WTC11 (cell line): ENCODE measurements at regions of chr11 and their contacts with region 1.

Region 1: DNA sequence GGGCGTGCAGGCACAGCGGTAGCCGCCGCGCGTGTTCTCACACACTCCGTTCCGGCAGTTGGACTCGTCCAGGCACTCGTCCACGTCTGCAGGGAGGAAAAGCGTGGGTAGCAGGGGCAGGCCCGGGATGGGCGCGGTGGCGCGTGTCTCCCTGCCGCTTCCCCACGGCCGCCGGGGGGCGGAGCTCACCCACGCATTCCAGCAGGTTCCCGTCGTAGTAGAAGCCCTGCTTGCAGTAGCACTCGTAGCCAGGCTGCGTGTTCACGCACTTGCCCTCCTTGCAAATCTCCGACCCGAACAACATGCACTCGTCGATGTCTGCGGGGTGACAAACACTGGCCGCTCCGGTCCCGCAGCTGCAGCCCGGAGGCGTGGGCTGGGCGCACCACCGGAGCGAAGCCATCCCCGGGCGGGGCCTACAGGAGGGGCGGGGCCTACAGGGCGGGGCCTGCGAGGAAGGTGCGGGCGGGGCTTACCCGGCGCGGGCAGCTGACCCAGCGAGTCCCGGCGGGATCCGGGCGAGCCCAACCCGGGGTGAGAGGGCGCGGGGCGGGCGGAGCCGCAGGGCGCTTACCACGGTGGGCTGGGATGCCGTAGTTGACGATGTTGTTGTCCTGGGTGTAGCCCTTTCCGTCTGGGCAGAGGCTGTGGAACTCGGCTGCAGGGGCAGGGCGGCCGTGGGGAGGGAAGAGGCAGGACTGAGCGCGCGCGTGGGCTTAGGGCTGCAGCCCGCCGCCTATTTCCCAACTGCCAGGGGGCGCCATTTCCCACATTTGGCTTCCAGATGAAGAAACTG is 15.6 kb downstream of the SCYL1 start:
- DNase-seq: peak; percentile 93
- ATAC-seq: peak; percentile 83
- H3K4me3 Mint-ChIP-seq: peak overlapping the region; percentile 68
- H3K27ac Mint-ChIP-seq: no peak overlapping the region
- H3K4me1 Mint-ChIP-seq: peaks cover 3% of the 10 kb centered on the region
- H3K27me3 Mint-ChIP-seq: peaks cover 60% of the 10 kb centered on the region
- CTCF ChIP-seq: peak; percentile 92

Region 2: DNA sequence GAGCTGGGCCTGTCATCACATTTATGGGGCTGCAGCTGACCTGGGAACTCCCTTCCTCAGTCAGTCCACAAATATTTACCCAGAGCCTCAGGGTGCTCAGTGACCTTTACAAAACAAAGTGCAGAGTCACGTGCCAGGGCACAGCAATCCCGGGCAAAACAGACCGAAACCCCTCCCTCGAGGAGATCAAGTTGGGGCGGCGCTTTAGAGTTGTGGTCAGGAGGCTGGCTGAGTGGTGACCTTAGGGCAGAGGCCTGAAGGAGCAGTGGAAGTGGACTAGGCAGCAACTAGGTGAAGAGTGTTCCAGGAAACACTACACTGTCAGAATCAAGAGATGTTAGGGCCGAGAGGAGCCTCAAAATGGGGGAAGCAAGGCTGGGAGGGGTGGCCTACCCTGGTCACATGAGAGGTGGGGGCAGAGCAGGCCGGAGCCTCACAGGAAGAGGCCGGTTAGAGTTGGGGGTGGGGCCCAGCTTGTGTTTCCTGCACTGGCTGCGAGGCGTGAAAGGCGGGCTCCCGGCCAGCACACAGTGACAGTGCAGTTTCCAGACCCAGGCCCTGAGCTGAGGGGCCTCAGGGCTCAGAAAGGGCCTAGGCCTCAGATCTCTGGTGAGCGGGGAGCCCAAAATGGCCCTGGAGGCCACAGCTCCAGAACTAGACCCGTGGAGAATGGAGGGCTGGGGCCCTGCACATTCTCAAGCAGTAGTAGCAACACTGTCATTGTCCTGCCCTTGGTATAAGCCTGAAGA is 121.6 kb before region 1 on chr11:
- CTCF ChIA-PET with region 1: interaction called, 15 read pairs
- POLR2A ChIA-PET with region 1: no interaction called
- DNase-seq: peak; percentile 90
- ATAC-seq: peak; percentile 66
- H3K4me3 Mint-ChIP-seq: peak overlapping the region; percentile 3
- H3K27ac Mint-ChIP-seq: peak overlapping the region; percentile 100
- H3K4me1 Mint-ChIP-seq: peaks cover 76% of the 10 kb centered on the region
- H3K27me3 Mint-ChIP-seq: 0 out of 2 replicates have a peak, but pooled peaks cover 2% of the 10 kb centered on the region
- CTCF ChIP-seq: no peak

Region 3: DNA sequence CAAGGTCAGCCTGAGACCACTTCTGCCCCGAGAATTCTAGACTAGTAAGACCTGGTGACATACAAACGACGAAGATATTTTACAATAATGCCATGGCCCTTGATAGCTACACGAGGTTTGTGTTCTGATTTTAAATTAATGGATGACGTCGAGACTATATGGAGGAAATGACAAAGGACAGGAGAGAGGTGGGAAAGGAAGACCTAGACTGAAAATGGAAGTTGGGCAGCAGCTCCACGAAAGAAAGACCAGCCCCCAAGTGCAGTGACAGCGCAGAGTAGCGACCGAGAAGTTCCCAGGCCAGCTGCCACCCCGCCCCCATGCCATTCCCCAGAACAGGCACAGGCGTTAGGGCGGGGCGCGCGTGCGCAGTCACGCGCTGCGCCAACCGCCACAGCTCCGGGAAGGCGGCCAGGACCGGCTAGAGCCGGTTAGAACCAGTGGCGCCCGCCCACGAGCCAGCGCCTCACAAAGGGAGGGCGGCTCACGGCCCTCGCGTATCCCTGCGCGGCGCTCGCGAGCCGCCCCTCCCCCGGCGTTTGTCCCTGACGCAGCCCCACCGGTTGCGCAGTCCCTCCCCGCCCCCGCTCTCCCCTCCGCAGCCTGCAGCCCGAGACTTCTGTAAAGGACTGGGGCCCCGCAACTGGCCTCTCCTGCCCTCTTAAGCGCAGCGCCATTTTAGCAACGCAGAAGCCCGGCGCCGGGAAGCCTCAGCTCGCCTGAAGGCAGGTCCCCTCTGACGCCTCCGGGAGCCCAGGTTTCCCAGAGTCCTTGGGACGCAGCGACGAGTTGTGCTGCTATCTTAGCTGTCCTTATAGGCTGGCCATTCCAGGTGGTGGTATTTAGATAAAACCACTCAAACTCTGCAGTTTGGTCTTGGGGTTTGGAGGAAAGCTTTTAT is 43.1 kb before region 1 on chr11:
- CTCF ChIA-PET with region 1: interaction called, 6 read pairs
- POLR2A ChIA-PET with region 1: interaction called, 10 read pairs
- DNase-seq: peak; percentile 98
- ATAC-seq: peak; percentile 89
- H3K4me3 Mint-ChIP-seq: peak overlapping the region; percentile 63
- H3K27ac Mint-ChIP-seq: peak overlapping the region; percentile 97
- H3K4me1 Mint-ChIP-seq: peaks cover 39% of the 10 kb centered on the region
- H3K27me3 Mint-ChIP-seq: no peaks in the 10 kb centered on the region
- CTCF ChIP-seq: no peak

Region 4: GRCh38 chr11:65524741-65525545 is 15.6 kb before region 1 on chr11 and contains the start of gene SCYL1:
- CTCF ChIA-PET with region 1: interaction called, 27 read pairs
- POLR2A ChIA-PET with region 1: interaction called, 4 read pairs
- DNase-seq: peak; percentile 78
- ATAC-seq: peak; percentile 82
- H3K4me3 Mint-ChIP-seq: peak within 1 kb of the TSS; percentile 73
- H3K27ac Mint-ChIP-seq: no peak within 1 kb of the TSS; the same call in 1 of the 2 replicates
- H3K4me1 Mint-ChIP-seq: peaks cover 19% of the 10 kb centered on the region
- H3K27me3 Mint-ChIP-seq: peaks cover 11% of the 10 kb centered on the region
- CTCF ChIP-seq: no peak
- total RNA-seq, gene SCYL1: 69.6 to 76.8 TPM (median 73.0 TPM) in 3 replicates

Region 5: DNA sequence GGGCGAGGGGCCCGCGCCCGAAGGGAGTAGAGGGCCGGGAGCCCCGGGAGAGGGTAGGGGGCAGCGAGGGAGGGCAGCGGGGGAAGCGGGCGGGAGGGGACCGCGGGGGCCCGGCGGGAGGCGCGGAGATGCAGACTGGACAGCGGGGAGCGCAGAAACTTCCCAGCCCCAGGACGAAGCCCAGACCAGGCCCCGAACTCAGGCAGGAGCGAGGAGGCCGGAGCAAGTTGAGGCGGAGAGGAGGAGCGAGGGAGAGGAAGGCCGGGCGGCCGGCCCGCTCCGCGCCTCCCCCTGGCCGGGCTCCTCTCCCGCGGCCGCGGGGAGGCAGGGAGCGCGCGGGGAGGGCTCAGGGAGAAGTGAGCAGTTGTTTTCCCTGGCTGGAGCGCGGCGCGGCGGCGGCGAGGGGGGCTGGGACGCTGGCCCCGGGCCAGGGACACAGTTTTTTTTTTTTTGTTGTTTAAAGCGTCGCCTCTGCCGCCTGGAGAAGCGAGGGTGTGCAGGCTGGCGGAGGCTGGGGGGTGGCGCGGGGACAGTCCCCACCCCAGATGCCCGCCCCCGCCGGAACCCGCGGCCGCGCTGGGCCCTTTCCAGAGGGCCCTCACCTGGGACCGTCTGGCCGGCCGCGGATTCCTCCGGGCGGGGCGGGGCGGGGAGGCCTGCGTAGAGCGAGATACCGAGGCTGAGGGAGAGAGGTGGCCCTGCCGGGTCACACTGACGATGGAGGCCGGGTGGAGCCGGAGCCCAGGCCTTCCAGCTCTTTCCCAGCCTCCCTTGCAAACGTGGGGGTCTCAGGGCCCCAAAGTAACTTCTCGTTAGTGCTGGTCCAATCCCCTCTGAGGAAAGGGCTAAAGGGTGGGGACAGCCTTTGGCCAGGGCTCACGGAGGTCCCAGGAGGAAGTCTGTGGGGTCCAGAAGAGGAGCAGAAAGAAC is 17.8 kb after region 1 on chr11 and contains the start of gene LTBP3:
- CTCF ChIA-PET with region 1: interaction called, 171 read pairs
- POLR2A ChIA-PET with region 1: interaction called, 5 read pairs
- DNase-seq: peak; percentile 60
- ATAC-seq: peak; percentile 32
- H3K4me3 Mint-ChIP-seq: peak within 1 kb of the TSS; percentile 69
- H3K27ac Mint-ChIP-seq: peak within 1 kb of the TSS; percentile 33; the same call in 1 of the 2 replicates
- H3K4me1 Mint-ChIP-seq: peaks cover 50% of the 10 kb centered on the region
- H3K27me3 Mint-ChIP-seq: peaks cover 62% of the 10 kb centered on the region
- CTCF ChIP-seq: no peak
- total RNA-seq, gene LTBP3: 15.9 to 23.6 TPM (median 20.7 TPM) in 3 replicates

Region 6: DNA sequence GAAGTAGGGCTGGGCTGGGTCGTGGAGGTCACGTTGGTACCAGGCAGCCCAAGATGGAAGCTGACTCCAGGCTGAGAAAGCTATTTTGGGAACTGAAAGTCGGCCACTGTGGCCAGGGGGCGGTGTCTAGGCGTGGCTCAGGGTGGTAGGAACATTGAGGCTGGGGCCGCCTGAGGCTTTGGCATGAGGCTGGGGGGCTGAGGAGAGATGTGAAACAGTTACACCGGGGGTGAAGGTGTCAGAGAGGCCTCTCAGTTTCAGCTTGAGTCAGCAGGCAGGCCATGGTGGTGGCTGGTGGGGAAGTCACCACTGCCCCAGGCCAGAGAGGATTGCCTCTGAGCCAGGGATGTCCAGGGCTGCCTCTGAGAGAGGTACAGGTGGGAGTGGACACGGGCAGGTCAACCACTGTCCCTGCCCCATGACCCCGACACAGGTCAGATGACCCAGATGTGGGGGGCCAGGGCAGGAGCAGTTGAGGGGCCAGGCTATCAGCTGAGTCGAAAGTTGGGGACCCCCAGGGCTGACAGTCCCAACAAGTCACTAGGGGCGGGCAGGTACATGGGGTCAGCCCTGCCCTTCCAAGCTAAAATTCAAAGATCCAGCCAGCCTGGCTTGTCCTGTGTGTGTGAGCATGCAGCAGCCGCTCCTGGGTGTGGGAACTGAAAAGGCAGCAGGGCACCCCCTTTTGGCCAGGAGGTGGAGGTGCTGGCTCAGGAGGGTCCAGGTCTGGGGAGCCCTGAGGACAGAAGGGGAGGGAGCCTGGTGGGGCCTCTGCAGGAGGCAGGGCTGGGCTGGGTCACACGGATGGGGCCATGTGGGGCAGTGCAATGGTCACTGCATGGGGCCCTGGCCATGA is 47.9 kb after region 1 on chr11:
- CTCF ChIA-PET with region 1: interaction called, 271 read pairs
- POLR2A ChIA-PET with region 1: interaction called, 4 read pairs
- DNase-seq: peak; percentile 80
- ATAC-seq: peak; percentile 49
- H3K4me3 Mint-ChIP-seq: no peak overlapping the region
- H3K27ac Mint-ChIP-seq: 0 out of 2 replicates have a peak overlapping the region, but pooled peaks have one; percentile 19
- H3K4me1 Mint-ChIP-seq: peaks cover 37% of the 10 kb centered on the region
- H3K27me3 Mint-ChIP-seq: peaks cover 77% of the 10 kb centered on the region
- CTCF ChIP-seq: peak; percentile 49

Region 7: GRCh38 chr11:65615229-65615941 is 74.9 kb after region 1 on chr11 and contains the start of gene PCNX3:
- CTCF ChIA-PET with region 1: interaction called, 26 read pairs
- POLR2A ChIA-PET with region 1: interaction called, 4 read pairs
- DNase-seq: peak; percentile 100
- ATAC-seq: peak; percentile 91
- H3K4me3 Mint-ChIP-seq: peak within 1 kb of the TSS; percentile 94
- H3K27ac Mint-ChIP-seq: peak within 1 kb of the TSS; percentile 98
- H3K4me1 Mint-ChIP-seq: peaks cover 21% of the 10 kb centered on the region
- H3K27me3 Mint-ChIP-seq: no peaks in the 10 kb centered on the region; the same call in 1 of the 2 replicates
- CTCF ChIP-seq: no peak
- total RNA-seq, gene PCNX3: 44.6 to 51.6 TPM (median 45.8 TPM) in 3 replicates

Region 8: GRCh38 chr11:65817835-65818742 is 277.6 kb after region 1 on chr11:
- CTCF ChIA-PET with region 1: no interaction called
- POLR2A ChIA-PET with region 1: no interaction called
- DNase-seq: peak; percentile 96
- ATAC-seq: peak; percentile 87
- H3K4me3 Mint-ChIP-seq: peak overlapping the region; percentile 72
- H3K27ac Mint-ChIP-seq: no peak overlapping the region
- H3K4me1 Mint-ChIP-seq: 0 out of 2 replicates have a peak, but pooled peaks cover 5% of the 10 kb centered on the region
- H3K27me3 Mint-ChIP-seq: peaks cover 15% of the 10 kb centered on the region
- CTCF ChIP-seq: peak; percentile 100

Region 9: GRCh38 chr11:66011239-66011784 is 470.8 kb after region 1 on chr11:
- CTCF ChIA-PET with region 1: no interaction called
- POLR2A ChIA-PET with region 1: no interaction called
- DNase-seq: no peak
- ATAC-seq: no peak
- H3K4me3 Mint-ChIP-seq: peak overlapping the region; percentile 30; the same call in 1 of the 2 replicates
- H3K27ac Mint-ChIP-seq: no peak overlapping the region
- H3K4me1 Mint-ChIP-seq: peaks cover 8% of the 10 kb centered on the region; the same call in 1 of the 2 replicates
- H3K27me3 Mint-ChIP-seq: peaks cover 22% of the 10 kb centered on the region
- CTCF ChIP-seq: no peak